MCF 10A (cell line): ENCODE measurements at regions of chr3 and their contacts with region 1.

Region 1: DNA sequence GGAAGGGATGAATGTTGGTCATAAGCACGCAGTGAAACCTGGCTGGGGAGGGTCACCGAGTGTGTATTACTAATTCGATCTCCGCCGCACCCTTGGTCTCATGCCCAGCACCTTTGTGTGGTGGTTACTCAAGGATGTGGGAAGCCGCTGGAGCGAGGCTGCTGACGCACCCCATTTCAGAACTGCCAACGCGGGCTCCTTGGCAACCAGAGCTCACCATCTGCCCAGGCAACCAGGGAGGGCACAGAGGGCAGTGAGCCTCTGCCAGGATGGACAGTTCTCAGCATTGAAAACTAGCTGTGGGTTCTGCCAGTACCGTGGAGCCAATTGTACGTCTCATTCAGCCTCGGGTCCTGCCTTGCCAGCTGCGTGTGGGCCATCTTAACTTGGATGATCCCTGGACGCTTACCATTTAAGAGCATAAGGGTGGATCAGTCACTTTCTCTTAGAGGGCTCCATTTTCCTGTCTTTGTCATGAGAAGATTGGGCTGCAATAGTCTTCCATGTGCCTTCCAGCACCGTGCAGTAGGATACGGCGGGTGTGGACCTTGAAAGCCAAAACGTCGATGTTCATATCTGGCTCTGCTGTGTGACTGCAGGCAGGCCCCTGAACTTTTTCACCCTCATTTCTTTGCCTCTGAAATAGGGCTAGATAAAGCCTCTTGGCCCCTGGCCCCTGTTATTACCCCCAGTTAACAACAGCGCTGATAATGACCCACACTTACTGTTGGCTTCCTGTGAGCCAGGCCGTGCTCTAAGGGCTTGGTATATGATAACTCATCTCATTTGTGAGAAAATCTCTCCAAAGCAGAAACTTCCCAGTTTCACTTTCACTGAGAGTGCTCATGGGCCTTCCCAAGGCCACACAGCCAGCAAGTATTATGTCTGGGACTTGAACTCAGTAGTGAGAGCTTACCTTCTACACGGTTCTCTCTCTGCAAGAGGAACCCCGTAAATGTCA is 238.8 kb downstream of the OPA1 start:
- DNase-seq: peak; percentile 100
- H3K4me3 Mint-ChIP-seq: peak overlapping the region; percentile 61
- H3K27ac Mint-ChIP-seq: peak overlapping the region; percentile 100
- H3K4me1 Mint-ChIP-seq: peaks cover 56% of the 10 kb centered on the region
- H3K27me3 Mint-ChIP-seq: no peaks in the 10 kb centered on the region
- CTCF ChIP-seq: no peak

Region 2: DNA sequence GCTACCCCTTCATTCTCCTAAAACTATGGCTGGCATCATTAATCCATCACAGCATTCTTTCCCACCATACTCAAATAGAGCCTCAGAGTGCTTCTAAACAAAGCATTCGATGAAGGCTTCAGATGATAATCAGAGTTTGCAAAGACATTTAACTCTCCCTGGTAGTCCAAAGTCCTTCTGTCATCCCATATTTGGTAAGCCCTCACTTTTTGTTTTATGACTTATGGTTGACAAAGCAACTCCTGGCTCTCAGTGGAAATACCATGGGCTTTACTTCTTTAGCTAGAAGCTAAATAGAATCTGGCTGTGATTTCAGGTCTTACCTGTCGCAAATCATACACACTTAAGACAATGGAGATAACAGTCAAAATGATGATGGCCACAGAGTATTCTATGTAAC is 481.0 kb before region 1 on chr3:
- CTCF ChIA-PET with region 1: no interaction called
- POLR2A ChIA-PET with region 1: no interaction called
- intact Hi-C with region 1: no loop called
- DNase-seq: no peak
- H3K4me3 Mint-ChIP-seq: no peak overlapping the region
- H3K27ac Mint-ChIP-seq: no peak overlapping the region
- H3K4me1 Mint-ChIP-seq: no peaks in the 10 kb centered on the region
- H3K27me3 Mint-ChIP-seq: peaks cover 27% of the 10 kb centered on the region
- CTCF ChIP-seq: no peak

Region 3: DNA sequence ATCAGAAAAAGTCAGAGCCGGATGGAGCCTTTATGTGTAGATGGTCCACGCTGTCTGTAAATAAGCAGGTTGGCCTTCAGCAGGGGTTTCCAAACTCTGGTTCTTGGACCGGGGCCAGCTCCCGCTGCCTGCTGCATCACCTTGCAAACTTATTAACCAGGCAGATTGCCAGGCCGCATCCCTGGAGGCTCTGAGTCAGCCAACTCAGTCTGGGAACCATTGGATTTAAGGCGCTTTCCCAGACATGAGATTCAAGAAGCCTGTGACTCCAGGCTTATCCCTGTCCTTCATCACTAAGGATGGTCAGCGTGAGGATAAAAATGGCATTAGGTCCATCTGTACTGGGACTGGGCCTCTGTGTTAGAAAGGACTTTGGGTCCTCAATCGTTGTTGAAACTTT is 26.3 kb before region 1 on chr3:
- CTCF ChIA-PET with region 1: no interaction called
- POLR2A ChIA-PET with region 1: interaction called, 39 read pairs
- intact Hi-C with region 1: no loop called
- DNase-seq: peak; percentile 100
- H3K4me3 Mint-ChIP-seq: no peak overlapping the region
- H3K27ac Mint-ChIP-seq: no peak overlapping the region
- H3K4me1 Mint-ChIP-seq: peaks cover 19% of the 10 kb centered on the region
- H3K27me3 Mint-ChIP-seq: no peaks in the 10 kb centered on the region
- CTCF ChIP-seq: no peak

Region 4: GRCh38 chr3:193872265-193872753 is 40.5 kb after region 1 on chr3:
- CTCF ChIA-PET with region 1: interaction called, 7 read pairs
- POLR2A ChIA-PET with region 1: interaction called, 162 read pairs
- intact Hi-C with region 1: loop called (anchors 1 kb)
- DNase-seq: peak; percentile 99
- H3K4me3 Mint-ChIP-seq: no peak overlapping the region
- H3K27ac Mint-ChIP-seq: peak overlapping the region; percentile 27
- H3K4me1 Mint-ChIP-seq: peaks cover 68% of the 10 kb centered on the region
- H3K27me3 Mint-ChIP-seq: peaks cover 12% of the 10 kb centered on the region
- CTCF ChIP-seq: no peak

Region 5: GRCh38 chr3:194003125-194004057 is 171.6 kb after region 1 on chr3:
- CTCF ChIA-PET with region 1: no interaction called
- POLR2A ChIA-PET with region 1: interaction called, 33 read pairs
- intact Hi-C with region 1: loop called (anchors 1 kb)
- DNase-seq: peak; percentile 96
- H3K4me3 Mint-ChIP-seq: peak overlapping the region; percentile 67
- H3K27ac Mint-ChIP-seq: peak overlapping the region; percentile 69
- H3K4me1 Mint-ChIP-seq: peaks cover 22% of the 10 kb centered on the region
- H3K27me3 Mint-ChIP-seq: no peaks in the 10 kb centered on the region
- CTCF ChIP-seq: no peak

Region 6: GRCh38 chr3:194089357-194090177 is 257.8 kb after region 1 on chr3:
- CTCF ChIA-PET with region 1: interaction called, 4 read pairs
- POLR2A ChIA-PET with region 1: interaction called, 26 read pairs
- intact Hi-C with region 1: no loop called
- DNase-seq: peak; percentile 100
- H3K4me3 Mint-ChIP-seq: peak overlapping the region; percentile 57
- H3K27ac Mint-ChIP-seq: peak overlapping the region; percentile 89
- H3K4me1 Mint-ChIP-seq: peaks cover 25% of the 10 kb centered on the region
- H3K27me3 Mint-ChIP-seq: no peaks in the 10 kb centered on the region
- CTCF ChIP-seq: no peak

Region 7: DNA sequence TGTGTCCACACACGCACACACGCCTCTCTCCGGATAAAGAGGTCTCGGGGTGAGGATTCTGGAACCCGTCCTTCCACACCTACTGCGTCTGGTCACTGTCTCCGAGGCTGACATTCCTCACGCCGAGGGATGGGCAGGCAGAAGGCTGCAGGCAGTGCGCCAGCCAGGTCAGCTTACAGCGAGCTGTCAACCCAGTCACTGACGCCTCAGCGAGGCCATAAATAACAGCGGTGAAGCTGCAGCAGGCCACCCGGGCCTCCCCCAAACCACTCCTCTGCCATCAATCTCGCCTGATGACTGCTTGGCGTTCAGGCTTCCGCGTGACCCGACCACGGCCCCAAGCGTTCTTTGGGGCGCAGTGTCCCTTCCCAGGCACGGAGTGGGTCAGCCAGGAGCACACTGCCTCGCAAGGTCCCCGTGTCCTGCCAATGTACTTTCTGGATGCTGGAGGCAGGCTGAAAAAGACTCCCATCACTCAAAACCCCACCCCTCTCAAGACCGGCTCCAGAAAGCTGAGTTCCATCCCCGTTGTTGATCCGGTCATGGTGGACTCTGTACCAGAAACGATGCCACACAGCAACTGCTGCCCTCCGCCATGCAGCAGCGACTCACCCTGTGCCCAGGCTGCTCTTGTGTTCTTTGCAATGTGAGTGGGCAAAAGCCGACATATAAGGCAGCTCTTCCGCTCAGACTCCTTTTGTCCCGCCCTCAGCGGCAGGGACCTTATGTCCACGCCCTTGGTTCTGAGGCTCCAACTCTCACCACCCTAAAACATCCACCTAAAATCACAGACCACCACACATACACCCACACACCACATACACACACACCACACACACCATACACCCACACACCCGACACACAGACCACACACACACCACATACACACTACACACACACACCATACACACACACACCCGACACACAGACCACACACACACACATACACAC is 492.3 kb after region 1 on chr3:
- CTCF ChIA-PET with region 1: interaction called, 4 read pairs
- POLR2A ChIA-PET with region 1: interaction called, 19 read pairs
- intact Hi-C with region 1: loop called (anchors 2 kb)
- DNase-seq: peak; percentile 86
- H3K4me3 Mint-ChIP-seq: no peak overlapping the region
- H3K27ac Mint-ChIP-seq: no peak overlapping the region
- H3K4me1 Mint-ChIP-seq: no peaks in the 10 kb centered on the region
- H3K27me3 Mint-ChIP-seq: no peaks in the 10 kb centered on the region
- CTCF ChIP-seq: no peak